Gastrocnemius medialis (tissue), 4 donors: ENCODE measurements at regions of chr6 and their contacts with region 1.

Region 1: GRCh38 chr6:156564127-156564806 is 212.9 kb upstream of the ARID1B start:
- DNase-seq: peak; percentile 65 to 67
- ATAC-seq: peak; percentile 90 to 98
- H3K4me3 ChIP-seq: no peak overlapping the region
- H3K27ac ChIP-seq: no peak overlapping the region
- H3K4me1 ChIP-seq: peaks cover 3 to 10% of the 10 kb centered on the region in 2 donors
- H3K27me3 ChIP-seq: no peaks in the 10 kb centered on the region
- CTCF ChIP-seq: peak; percentile 89 to 97 (median 90)
- POLR2A ChIP-seq: no peak

Region 2: DNA sequence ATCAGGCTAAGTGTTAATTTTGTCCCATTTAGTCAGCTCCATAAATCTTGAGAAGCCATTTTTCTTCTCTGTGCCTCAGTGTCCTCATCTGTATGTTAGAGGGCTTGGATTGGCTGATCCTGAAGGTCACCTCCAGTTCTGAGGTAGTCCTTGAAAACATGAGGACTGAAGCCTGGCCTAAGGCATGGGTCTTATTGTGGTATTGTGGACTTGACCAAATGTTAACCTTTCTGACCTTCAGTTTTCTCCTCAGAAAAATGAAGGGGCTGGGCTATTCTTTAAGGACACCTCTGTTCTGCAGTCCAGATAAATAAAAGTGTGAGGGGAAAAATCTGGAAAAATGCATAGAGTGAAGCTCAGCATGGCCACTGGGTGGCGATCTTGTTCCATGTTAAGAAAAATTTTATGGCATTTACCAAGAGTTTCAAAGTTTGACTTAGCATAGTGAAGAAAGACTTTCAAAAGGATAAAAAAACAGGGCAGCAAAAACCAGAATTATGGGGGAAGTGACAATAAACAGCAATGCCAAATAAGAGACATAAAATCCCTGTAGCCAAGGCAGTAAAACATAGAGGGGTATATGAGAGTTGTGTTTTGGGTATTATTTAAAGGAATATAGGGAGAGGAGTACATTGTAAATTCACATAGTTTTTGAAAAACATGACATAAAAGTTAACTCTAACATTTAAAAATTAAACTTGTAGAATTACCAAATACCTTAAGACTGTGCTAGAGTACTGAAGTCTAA is 1236.8 kb before region 1 on chr6:
- in situ Hi-C with region 1: no loop called
- intact Hi-C with region 1: loop called (anchors 5 kb)
- DNase-seq: peak in 1 of 2 donors; percentile 15
- ATAC-seq: peak; percentile 59 to 81
- H3K4me3 ChIP-seq: no peak overlapping the region
- H3K27ac ChIP-seq: no peak overlapping the region
- H3K4me1 ChIP-seq: peaks cover 0 to 3% of the 10 kb centered on the region in 2 donors
- H3K27me3 ChIP-seq: no peaks in the 10 kb centered on the region
- CTCF ChIP-seq: peak; percentile 80 to 86 (median 84)
- POLR2A ChIP-seq: no peak

Region 3: DNA sequence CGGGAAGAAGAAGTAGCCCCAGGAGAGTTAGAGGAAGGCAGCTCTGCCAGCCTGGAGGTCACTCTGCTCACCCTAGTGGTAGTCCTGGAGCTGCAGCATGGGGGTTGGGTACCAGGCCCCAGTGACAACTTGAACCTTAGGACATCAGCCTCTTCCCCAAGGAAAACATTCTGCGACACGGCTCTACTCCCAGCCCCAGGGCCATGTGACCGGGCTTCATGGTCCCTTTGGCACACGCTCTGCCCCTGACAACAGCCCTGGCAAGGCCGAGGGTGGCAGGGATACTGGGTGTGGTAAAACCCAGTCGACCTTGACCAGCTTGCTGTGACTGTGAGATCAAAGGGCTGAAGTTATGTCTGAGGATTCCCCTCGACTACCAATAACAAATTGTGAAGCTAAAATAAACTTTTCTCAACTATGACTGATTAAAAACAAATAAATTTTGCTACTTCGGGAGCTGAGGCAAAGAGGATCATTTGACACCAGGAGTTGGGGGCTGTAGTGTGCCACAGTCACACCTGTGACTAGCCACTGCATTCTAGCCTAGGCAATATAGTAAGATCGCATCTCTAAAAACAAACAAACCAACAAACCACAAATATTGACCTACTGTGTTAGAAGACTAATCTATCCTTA is 188.5 kb after region 1 on chr6:
- in situ Hi-C with region 1: loop called in 3 of 4 experiments (anchors 10 to 25 kb)
- intact Hi-C with region 1: no loop called
- DNase-seq: peak in 1 of 2 donors; percentile 21
- ATAC-seq: peak in 1 of 2 donors; percentile 46
- H3K4me3 ChIP-seq: no peak overlapping the region
- H3K27ac ChIP-seq: no peak overlapping the region
- H3K4me1 ChIP-seq: no peaks in the 10 kb centered on the region
- H3K27me3 ChIP-seq: no peaks in the 10 kb centered on the region
- CTCF ChIP-seq: peak in 2 of 5 experiments; percentile 23 to 38
- POLR2A ChIP-seq: no peak

Region 4: GRCh38 chr6:156866220-156867015 is 302.2 kb after region 1 on chr6:
- in situ Hi-C with region 1: no loop called
- intact Hi-C with region 1: loop called (anchors 10 kb)
- DNase-seq: peak; percentile 39 to 58
- ATAC-seq: peak; percentile 75 to 79
- H3K4me3 ChIP-seq: no peak overlapping the region
- H3K27ac ChIP-seq: peak overlapping the region in 2 of 4 donors; percentile 46 to 51
- H3K4me1 ChIP-seq: peaks cover 66 to 70% of the 10 kb centered on the region in 2 donors
- H3K27me3 ChIP-seq: no peaks in the 10 kb centered on the region
- CTCF ChIP-seq: peak in 1 of 5 experiments; percentile 11
- POLR2A ChIP-seq: no peak

Region 5: DNA sequence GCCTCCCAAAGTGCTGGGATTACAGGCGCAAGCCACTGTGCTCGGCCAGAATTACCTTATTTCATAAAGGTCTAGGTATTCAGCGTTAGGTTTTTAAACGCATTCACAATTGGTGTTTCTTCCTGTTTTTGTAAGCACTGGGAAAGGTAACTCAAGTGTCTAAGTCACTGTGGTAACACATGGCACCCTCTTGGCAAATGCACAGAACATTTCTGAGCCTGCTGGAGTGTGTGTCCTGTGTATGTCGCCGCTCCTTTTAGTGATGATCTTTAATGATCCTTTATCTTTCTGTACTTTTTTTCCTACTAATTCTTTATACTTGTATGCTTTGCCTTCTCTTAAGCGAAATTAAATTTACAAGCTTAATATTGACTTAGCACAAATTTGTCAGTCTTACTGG is 475.9 kb after region 1 on chr6:
- in situ Hi-C with region 1: loop called in 3 of 4 experiments (anchors 5 to 25 kb)
- intact Hi-C with region 1: no loop called
- DNase-seq: no peak
- ATAC-seq: no peak
- H3K4me3 ChIP-seq: no peak overlapping the region
- H3K27ac ChIP-seq: no peak overlapping the region
- H3K4me1 ChIP-seq: peaks cover 21 to 23% of the 10 kb centered on the region in 2 donors
- H3K27me3 ChIP-seq: no peaks in the 10 kb centered on the region
- CTCF ChIP-seq: no peak
- POLR2A ChIP-seq: no peak

Region 6: GRCh38 chr6:157184202-157185020 is 620.1 kb after region 1 on chr6:
- in situ Hi-C with region 1: loop called (anchors 5 to 25 kb)
- intact Hi-C with region 1: loop called (anchors 1 kb)
- DNase-seq: peak; percentile 41 to 65
- ATAC-seq: peak; percentile 22 to 40
- H3K4me3 ChIP-seq: no peak overlapping the region
- H3K27ac ChIP-seq: peak overlapping the region in 3 of 4 donors; percentile 9 to 46 (median 24)
- H3K4me1 ChIP-seq: peaks cover 26 to 27% of the 10 kb centered on the region in 2 donors
- H3K27me3 ChIP-seq: no peaks in the 10 kb centered on the region
- CTCF ChIP-seq: peak; percentile 83 to 92 (median 90)
- POLR2A ChIP-seq: no peak